ENCODE measurements at regions of chr7 and their contacts with region 1.

Region 1: DNA sequence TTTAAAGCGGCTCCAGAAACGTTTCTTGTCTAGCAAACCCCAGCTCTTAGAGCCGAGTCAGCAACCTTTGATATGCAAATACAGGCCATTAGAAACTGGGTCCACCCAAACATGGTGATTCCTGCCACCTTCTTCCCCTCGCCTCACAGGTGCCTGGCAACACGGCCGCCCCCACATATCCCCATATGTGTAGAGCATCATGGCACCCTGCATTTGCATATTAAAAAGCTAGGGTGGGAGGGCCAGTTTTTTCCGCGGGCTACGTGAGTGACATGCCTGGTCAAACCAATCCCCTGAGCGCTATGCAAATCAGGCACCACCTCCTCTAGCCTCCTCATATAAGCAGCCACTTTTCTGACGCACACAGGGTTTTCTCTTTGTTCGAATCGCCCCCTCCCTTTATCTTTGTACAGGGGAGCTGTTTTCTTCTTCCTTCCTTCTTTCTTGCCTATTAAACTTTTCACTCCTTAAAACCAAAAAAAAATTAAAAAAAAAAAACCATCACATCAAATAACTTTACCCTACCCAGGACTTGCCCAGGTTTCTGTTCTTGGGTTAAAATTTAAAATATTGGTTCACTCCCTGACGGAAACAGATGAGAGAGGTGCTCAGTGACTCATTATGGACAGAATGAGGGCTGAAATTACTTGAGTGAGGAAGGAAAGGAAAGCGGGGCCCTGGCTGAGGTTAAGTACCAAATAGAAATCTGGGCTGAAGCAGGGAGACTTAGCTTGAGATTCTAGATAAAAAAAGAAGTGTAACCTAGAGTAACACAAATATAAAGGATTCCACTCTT is 59.8 kb downstream of the COA1 start:
- DNase-seq: peak; percentile 77 to 93 (median 79)
- H3K4me3 ChIP-seq: peak overlapping the region in 1 of 2 donors; percentile 34
- H3K4me3 Mint-ChIP-seq: peak overlapping the region; percentile 82 to 92 (median 85)
- H3K27ac ChIP-seq: peak overlapping the region; percentile 66
- H3K27ac Mint-ChIP-seq: peak overlapping the region; percentile 85 to 98 (median 96)
- H3K4me1 ChIP-seq: peaks cover 60% of the 10 kb centered on the region
- H3K4me1 Mint-ChIP-seq: peaks cover 43 to 86% (median 68%) of the 10 kb centered on the region in 4 donors
- H3K27me3 ChIP-seq: no peaks in the 10 kb centered on the region
- H3K27me3 Mint-ChIP-seq: no peaks in the 10 kb centered on the region

Region 2: GRCh38 chr7:43553999-43554398 is 115.5 kb before region 1 on chr7:
- CTCF ChIA-PET with region 1: no interaction called
- POLR2A ChIA-PET with region 1: no interaction called
- intact Hi-C with region 1: no loop called
- DNase-seq: peak in 2 of 5 donors; percentile 6 to 35
- H3K4me3 ChIP-seq: no peak overlapping the region
- H3K4me3 Mint-ChIP-seq: peak overlapping the region in 6 of 8 donors; percentile 4 to 84 (median 56)
- H3K27ac ChIP-seq: no peak overlapping the region
- H3K27ac Mint-ChIP-seq: peak overlapping the region in 3 of 7 donors; percentile 17 to 86 (median 72)
- H3K4me1 ChIP-seq: peaks cover 26% of the 10 kb centered on the region
- H3K4me1 Mint-ChIP-seq: peaks cover 15 to 29% (median 17%) of the 10 kb centered on the region in 4 donors
- H3K27me3 ChIP-seq: no peaks in the 10 kb centered on the region
- H3K27me3 Mint-ChIP-seq: peaks cover 7 to 8% of the 10 kb centered on the region in 2 donors

Region 3: DNA sequence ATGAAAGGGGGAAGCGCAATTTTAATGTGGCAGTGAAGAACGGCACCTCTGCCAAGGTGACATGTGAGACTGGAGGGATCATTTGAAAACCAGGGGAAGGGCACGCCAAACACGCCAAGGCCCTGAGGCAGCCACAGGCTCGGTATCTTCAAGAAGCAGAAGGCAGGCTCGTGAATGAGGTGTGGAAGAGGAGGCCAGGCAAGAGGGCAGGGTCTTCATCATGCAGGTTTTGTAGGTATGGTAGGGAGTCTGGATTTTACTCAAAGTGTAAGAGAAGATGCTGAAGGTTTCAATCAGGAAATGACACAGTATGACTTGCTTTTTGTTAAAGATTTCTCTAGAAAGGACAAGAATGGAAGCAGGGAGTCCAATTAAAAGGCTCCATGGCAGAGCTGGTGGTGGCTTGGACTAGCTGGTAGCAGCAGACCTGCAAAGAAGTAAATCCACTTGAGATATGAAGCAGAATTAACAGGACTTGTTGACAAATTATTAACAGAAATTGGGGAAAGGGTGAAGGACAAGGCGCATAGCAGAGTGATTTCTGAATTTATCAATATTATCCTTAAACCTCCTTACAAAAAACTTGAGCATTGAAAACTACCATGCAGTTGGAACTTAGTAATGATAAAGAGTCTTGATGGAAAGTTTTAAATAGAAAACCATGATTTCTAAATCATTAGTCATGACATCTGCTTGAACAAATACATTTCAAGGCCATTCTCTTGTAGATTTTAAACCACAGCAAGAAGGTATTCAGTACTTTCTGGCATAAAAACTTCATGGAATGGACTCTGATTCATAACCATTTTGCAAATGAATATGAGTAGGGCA is 10.6 kb before region 1 on chr7:
- CTCF ChIA-PET with region 1: no interaction called
- POLR2A ChIA-PET with region 1: interaction called, 9 read pairs
- intact Hi-C with region 1: loop called (anchors 1 kb)
- DNase-seq: no peak
- H3K4me3 ChIP-seq: no peak overlapping the region
- H3K4me3 Mint-ChIP-seq: peak overlapping the region in 7 of 8 donors; percentile 43 to 83 (median 66)
- H3K27ac ChIP-seq: peak overlapping the region; percentile 21
- H3K27ac Mint-ChIP-seq: peak overlapping the region; percentile 79 to 94 (median 92)
- H3K4me1 ChIP-seq: peaks cover 39% of the 10 kb centered on the region
- H3K4me1 Mint-ChIP-seq: peaks cover 34 to 58% (median 49%) of the 10 kb centered on the region in 4 donors
- H3K27me3 ChIP-seq: no peaks in the 10 kb centered on the region
- H3K27me3 Mint-ChIP-seq: no peaks in the 10 kb centered on the region

Measured in CD4-positive, alpha-beta memory T cell (primary cell).